Activated CD4-positive, alpha-beta memory T cell treated with anti-CD3 and anti-CD28 coated beads, Interleukin-2, amount 10 ng/mL, durations not matched to agents 7 days and 5 days (primary cell): ENCODE measurements at regions of chr6 and their contacts with region 1.

Region 1: DNA sequence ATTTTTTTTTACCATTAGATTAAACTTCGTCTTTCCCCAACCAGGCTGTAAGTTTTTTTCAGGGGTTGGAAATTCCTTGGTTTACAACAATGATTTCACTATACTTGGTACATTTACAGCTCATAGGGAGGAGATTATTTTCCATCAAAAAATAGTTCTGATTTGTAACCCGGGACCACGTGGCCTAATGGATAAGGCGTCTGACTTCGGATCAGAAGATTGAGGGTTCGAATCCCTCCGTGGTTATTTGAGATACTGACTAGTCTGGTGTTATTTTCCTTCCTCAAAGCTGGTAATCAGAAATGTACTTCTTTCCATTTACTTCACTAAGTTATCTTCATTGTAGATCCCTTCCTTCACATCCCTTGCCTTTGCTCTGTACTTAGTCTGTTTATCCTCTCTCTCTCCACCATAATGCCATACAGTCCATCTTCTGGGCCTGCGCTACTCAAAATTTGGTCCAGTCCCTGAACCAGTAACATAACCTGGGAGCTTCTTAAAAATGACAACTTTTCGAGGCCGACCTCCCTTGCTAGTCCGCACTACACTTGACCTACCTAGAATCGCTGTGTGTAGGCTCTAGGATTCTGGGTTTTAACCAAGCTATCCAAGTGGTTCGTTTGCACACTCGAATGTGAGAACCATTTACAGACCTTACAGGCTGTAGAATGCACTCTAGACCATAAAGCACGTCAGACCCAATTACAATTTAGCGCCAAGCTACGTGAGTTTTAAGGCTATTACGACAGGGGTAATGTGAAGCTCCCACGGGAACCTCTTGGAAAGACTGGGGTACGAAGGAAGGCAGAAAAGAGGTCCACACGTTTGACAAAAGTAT is 42.1 kb upstream of the BTN3A2 start:
- DNase-seq: peak; percentile 54
- H3K4me3 Mint-ChIP-seq: peak overlapping the region; percentile 81
- H3K27ac Mint-ChIP-seq: peak overlapping the region; percentile 70
- H3K4me1 Mint-ChIP-seq: peaks cover 38% of the 10 kb centered on the region
- H3K27me3 Mint-ChIP-seq: peaks cover 25% of the 10 kb centered on the region

Region 2: DNA sequence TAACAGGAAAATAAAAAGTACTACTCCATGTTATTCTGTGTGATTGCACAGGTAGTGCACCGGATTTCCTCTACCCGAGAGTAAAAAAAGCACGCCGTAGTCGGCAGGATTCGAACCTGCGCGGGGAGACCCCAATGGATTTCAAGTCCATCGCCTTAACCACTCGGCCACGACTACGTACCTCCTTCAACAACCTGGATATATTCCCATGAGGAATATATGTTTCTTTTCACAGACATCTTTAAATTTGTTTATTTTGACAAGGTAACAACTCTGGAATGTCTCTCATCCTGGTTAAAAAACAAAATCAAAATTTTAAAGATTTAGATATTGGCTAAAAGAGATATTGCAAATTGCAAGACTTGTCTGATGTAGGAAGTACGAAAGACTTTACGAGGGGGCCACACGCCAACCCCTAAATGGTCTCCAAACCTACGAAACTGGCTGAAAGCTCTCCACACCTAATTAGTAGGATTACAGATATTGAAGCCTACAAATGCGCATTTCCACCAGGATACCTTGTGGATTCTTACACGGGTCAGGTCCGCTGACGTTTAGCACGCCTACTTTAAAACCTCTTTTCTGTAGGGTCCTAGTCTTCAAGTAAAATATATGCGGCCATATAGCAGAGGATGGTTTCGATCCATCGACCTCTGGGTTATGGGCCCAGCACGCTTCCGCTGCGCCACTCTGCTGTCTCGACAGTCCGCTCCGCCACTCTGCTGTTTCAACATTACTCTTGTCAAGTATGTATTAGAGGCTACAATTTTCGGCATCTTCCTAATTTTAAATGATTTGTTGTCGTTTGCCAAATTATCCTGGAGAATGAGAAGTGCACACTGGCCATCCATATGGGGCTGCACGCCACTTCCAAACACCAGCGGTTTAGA is 10.1 kb before region 1 on chr6:
- CTCF ChIA-PET with region 1: interaction called, 10 read pairs
- POLR2A ChIA-PET with region 1: interaction called, 15 read pairs
- DNase-seq: peak; percentile 81
- H3K4me3 Mint-ChIP-seq: peak overlapping the region; percentile 83
- H3K27ac Mint-ChIP-seq: peak overlapping the region; percentile 82
- H3K4me1 Mint-ChIP-seq: peaks cover 53% of the 10 kb centered on the region
- H3K27me3 Mint-ChIP-seq: no peaks in the 10 kb centered on the region

Region 3: DNA sequence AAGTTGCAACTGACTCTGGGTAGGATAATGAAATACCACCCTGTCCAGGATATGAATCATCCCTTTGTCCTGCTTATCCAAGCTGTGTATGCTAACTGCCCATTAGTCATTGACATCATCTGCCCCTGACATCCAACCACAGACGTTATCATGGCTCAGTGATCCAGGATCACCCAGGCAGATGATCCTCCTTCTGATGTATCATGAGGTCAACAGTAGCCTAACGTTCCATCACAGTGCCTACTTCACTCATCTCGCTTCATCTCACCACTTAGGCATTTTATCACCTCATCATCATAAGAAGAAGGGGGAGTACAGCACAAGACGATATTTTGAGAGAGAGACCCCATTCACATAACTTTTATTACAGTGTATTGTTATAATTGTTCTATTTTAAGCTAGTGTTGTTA is 28.7 kb after region 1 on chr6:
- CTCF ChIA-PET with region 1: no interaction called
- POLR2A ChIA-PET with region 1: no interaction called
- DNase-seq: no peak
- H3K4me3 Mint-ChIP-seq: no peak overlapping the region
- H3K27ac Mint-ChIP-seq: no peak overlapping the region
- H3K4me1 Mint-ChIP-seq: peaks cover 4% of the 10 kb centered on the region
- H3K27me3 Mint-ChIP-seq: peaks cover 8% of the 10 kb centered on the region